Left ventricle myocardium superior (tissue), 1 donor: ENCODE measurements at regions of chr19 and their contacts with region 1.

Region 1: GRCh38 chr19:49929611-49930482 is 543 bp upstream of the NUP62 start:
- DNase-seq: peak; percentile 93
- ATAC-seq: peak; percentile 92

Region 2: DNA sequence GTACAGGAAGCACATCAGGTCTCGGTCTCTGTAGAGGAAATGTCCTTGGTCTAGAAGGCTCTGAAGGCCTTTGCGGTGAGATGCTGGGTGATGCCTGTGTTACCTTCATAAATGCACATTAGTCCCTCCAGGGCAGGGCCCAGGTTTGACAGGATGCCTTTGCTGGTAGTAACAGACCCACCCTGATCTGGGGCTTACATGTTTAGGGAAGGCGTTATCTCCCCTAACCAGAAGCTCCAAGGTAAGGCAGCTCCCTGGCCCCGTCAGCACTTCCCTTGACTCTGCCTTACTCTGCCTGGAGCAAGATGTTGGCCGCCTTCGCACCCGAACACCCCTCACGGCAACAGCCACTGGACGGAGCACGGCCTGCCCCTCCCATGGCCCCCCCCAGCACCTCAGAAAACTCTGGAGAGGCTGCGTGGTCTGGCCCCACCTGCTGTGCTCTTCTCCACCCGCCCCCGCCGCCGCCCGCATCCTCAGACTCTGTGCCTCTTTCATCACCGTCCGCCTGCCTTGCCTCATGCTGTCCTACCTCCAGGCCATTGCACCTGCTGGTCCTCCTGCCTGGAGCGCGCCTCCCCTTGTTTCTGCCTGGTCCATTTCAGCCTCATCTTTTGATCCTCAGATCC is 154.0 kb before region 1 on chr19:
- intact Hi-C with region 1: no loop called
- DNase-seq: no peak
- ATAC-seq: no peak

Region 3: DNA sequence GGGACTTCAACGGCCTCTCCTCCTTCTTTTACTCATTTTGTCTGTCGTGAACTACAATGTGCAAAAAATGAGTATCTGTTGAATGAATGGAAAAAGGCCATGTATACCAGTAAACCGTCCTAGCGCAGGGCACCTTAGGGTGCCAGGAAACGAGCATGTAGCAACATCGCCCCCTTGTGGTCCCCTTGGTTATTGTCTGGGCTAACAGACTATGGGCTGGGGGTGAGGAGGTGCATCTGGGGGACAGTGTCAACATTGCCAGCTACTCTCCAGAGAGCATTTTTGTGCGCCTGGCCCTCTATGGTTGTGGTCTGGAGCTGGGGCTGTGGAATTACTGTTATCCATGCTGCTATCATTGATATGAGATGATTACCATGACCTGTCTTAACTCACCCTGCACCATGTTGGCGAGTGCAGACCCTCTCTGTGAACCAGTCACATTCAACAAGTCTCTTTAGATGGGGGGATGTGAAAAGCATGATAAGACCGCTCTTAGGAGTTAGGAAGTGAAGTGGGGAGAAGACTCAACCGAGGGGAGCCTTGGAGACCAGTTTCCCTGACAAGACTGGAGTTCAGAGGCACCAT is 53.9 kb after region 1 on chr19:
- intact Hi-C with region 1: loop called (anchors 10 kb)
- DNase-seq: peak; percentile 67
- ATAC-seq: peak; percentile 53